Motor neuron (in vitro differentiated cells): ENCODE measurements at regions of chr12 and their contacts with region 1.

Region 1: GRCh38 chr12:116784238-116784612 is 46.1 kb downstream of the RNFT2 start:
- ATAC-seq: peak in 5 of 8 experiments; percentile 21 to 80 (median 27)
- H3K4me3 ChIP-seq: no peak overlapping the region
- H3K27ac ChIP-seq: no peak overlapping the region
- H3K4me1 ChIP-seq: no peaks in the 10 kb centered on the region

Region 2: GRCh38 chr12:116591855-116592637 is 192.2 kb before region 1 on chr12:
- in situ Hi-C with region 1: no loop called
- ATAC-seq: peak in 4 of 8 experiments; percentile 14 to 73 (median 48)
- H3K4me3 ChIP-seq: no peak overlapping the region
- H3K27ac ChIP-seq: no peak overlapping the region
- H3K4me1 ChIP-seq: peaks cover 0 to 2% of the 10 kb centered on the region in 2 donors

Region 3: DNA sequence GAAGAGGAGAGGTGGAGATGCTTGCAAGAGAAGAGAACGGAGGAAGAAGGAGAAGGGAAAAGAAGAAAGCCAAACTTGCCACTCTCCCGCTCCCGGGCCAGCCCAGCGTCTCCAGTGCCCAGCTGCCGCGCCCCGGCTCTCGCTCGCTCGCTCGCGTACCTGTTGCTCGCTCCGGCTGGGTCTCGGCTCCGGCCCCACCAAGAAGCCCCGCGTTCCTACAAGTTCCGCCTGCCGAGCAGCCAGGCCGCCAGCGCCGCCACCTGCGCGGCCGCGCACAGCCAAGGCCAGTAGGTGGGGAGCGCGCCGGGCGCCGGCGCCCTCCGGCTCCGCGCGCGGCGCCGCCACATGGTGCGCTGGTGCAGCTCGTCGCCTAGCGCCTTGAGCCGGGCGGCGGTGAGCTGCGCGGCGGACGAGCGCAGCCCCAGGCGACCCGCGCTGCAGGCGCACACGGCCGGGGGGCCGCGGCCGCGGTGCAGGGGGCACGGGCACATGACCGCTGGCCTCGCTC is 96.6 kb after region 1 on chr12:
- in situ Hi-C with region 1: loop called in 1 of 9 experiments (anchors 25 kb)
- ATAC-seq: peak; percentile 54 to 88 (median 80)
- H3K4me3 ChIP-seq: peak overlapping the region; percentile 43 to 58 (median 58)
- H3K27ac ChIP-seq: peak overlapping the region in 1 of 2 donors; percentile 14
- H3K4me1 ChIP-seq: peaks cover 20 to 33% of the 10 kb centered on the region in 2 donors

Region 4: GRCh38 chr12:117143008-117143532 is 358.8 kb after region 1 on chr12:
- in situ Hi-C with region 1: no loop called
- ATAC-seq: peak in 5 of 8 experiments; percentile 74 to 87 (median 83)
- H3K4me3 ChIP-seq: no peak overlapping the region
- H3K27ac ChIP-seq: no peak overlapping the region
- H3K4me1 ChIP-seq: no peaks in the 10 kb centered on the region